BJ (cell line): ENCODE measurements at regions of chr13 and their contacts with region 1.

Region 1: DNA sequence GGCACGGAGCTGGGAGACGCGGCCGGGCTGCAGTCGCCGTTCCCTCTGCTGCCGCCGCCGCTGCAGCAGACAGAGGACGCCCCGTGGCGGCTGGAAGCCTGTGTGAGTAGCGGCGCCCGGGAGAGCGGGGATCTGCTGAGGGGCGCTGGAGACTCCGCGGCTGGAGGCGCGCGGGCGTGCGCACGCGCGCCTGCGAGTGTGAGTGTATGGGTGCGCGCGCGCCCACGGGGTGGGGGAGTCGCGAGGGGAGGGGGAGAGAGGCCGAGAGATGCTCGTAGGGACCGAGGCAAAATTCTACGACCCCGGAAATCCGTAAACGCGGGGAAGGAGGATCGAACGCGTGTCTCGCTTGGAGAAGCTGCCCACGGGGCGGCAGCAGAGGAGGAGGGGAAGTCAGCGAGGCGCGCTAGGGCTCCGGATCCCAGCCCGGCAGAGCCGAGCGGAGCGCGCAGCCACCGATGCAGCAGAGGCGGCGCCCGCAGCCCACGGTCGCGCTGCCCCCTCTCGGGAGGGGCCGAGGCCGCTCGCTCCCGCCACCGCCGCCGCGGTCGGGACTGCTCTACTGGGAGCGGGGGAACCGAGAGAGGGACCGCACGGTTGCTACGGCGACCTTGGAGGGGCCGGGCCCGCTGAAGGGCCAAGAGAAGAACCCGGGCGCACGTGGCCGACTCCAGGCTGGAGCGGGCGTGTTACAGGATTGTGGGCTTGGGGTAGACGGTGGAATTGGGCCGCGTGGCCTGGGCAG is at the start of gene ENOX1:
- DNase-seq: no peak
- H3K4me3 ChIP-seq: peak within 1 kb of the TSS; percentile 67
- H3K27me3 ChIP-seq: no peaks in the 10 kb centered on the region
- CTCF ChIP-seq: 0 out of 2 replicates have a peak, but pooled peaks have one; percentile 18
- polyA plus RNA-seq, gene ENOX1: 2.1 TPM in 2 replicates

Region 2: DNA sequence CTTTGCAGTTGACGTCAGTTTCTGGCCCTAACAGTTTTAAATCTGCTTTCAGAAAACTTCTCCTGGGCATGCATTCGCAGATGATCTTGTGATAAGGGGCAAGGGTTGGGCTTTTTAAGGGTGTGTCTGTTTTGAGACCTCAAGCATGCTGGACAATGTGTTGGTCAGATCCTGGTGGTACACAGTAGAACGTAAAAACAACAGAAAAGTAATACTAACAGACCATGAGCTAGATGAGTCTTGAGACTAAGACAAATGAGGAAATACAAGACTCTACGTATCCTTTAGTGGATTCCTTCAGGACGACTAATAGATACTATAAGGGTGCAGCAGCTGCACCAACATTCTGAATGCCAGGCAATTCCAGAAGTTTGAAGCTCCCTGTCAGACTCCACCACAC is 525.9 kb before region 1 on chr13:
- CTCF ChIA-PET with region 1: no interaction called
- POLR2A ChIA-PET with region 1: no interaction called
- DNase-seq: peak; percentile 9
- H3K4me3 ChIP-seq: no peak overlapping the region
- H3K27me3 ChIP-seq: no peaks in the 10 kb centered on the region
- CTCF ChIP-seq: no peak

Region 3: DNA sequence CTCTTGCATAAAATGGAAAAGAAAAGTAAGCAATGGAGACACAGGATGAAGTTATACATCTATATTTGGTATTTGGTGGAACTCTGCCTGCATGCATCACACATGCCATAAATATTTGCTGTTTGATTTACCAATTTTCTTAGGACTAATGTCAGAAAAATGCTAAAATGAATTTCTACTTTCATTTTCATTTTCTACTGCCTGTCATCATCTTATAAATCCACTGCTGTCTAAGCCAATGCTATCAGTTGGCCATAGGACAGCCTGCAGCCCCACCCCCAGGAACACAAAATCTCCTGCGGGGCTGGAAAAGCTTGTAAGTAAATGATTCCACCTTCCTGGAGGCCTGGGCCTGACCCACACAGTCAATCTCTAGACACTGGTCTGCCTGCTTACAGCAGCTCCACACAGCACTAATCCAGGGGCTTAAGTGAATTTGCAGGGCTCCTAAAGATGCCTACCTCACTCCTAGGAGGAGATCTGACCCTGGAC is 122.2 kb before region 1 on chr13:
- CTCF ChIA-PET with region 1: no interaction called
- POLR2A ChIA-PET with region 1: interaction called, 12 read pairs
- DNase-seq: peak; percentile 41
- H3K4me3 ChIP-seq: no peak overlapping the region
- H3K27me3 ChIP-seq: no peaks in the 10 kb centered on the region; the same call in 1 of the 2 replicates
- CTCF ChIP-seq: no peak